ENCODE measurements at regions of chr4 and their contacts with region 1.

Region 1: DNA sequence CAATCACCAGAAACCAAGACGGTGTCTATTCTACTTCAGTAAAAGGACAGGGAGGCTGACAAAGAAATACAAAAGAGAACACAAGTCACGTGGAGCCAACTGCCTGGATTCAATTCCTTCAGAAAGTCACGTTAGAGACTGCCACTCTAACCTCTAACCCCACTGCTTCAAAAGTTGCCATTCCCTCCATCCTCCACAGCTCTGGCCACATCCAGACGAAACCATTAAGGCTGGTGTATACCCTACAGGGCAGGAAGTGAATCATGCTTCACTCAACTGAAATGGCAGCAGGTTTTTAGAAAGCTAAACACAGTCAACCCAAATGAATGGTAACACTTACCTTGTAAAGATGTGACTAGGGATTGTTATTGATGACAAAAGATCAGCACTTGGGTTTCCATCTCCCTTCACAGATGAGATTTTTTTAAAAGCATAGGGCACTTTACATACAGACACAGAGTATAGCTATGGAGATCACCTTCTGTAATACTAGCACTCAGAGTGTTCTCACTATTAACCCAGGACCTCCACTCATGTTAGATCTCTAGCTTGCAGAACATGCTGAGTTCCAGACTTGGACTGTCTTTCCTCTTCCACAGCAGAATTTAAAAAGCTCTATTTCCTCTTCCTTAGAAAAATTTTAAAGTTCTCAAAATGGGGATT is 37.4 kb downstream of the MAML3 start:
- DNase-seq: peak in 4 of 9 experiments; percentile 16 to 38 (median 24)
- ATAC-seq: peak; percentile 92
- H3K4me3 ChIP-seq: no peak overlapping the region
- H3K4me3 Mint-ChIP-seq: no peak overlapping the region
- H3K27ac ChIP-seq: no peak overlapping the region
- H3K27ac Mint-ChIP-seq: no peak overlapping the region
- H3K4me1 ChIP-seq: peaks cover 12% of the 10 kb centered on the region
- H3K4me1 Mint-ChIP-seq: peaks cover 20% of the 10 kb centered on the region
- H3K27me3 ChIP-seq: no peaks in the 10 kb centered on the region
- H3K27me3 Mint-ChIP-seq: no peaks in the 10 kb centered on the region
- CTCF ChIP-seq: no peak

Region 2: DNA sequence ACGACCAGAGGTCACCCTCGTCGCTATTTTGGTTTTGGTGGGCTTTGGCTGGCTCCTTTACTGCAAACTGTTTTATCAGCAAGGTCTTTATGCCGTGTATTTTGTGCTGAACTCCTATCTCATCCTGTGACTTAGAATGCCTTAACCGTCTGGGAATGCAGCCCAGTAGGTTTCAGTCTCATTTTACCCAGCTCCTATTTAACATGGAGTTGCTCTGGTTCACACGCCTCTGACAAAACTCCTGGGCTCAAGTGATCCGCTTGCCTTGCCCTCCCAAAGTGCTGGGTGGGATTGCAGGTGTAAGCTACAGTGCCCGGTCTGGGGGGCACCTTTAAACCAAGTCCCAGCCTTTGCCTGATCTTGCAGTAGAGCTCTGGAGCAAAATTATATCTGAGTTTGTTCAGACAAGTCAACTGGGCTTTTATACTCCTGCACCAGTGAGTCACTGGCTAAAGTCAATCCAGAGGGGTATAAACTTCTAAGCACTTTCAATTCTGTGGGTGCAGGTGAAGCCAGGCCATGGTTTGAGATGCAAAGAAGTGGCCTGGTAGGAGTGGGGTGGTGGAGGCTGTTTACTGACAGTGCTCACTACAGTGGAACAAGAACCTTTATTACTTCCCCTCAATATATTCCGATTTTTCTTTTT is 400.7 kb before region 1 on chr4:
- CTCF ChIA-PET with region 1: no interaction called
- POLR2A ChIA-PET with region 1: no interaction called
- intact Hi-C with region 1: no loop called
- DNase-seq: no peak
- ATAC-seq: no peak
- H3K4me3 ChIP-seq: no peak overlapping the region
- H3K4me3 Mint-ChIP-seq: no peak overlapping the region
- H3K27ac ChIP-seq: no peak overlapping the region
- H3K27ac Mint-ChIP-seq: no peak overlapping the region
- H3K4me1 ChIP-seq: no peaks in the 10 kb centered on the region
- H3K4me1 Mint-ChIP-seq: no peaks in the 10 kb centered on the region
- H3K27me3 ChIP-seq: no peaks in the 10 kb centered on the region
- H3K27me3 Mint-ChIP-seq: no peaks in the 10 kb centered on the region
- CTCF ChIP-seq: no peak

Region 3: GRCh38 chr4:139934057-139934707 is 182.4 kb before region 1 on chr4:
- CTCF ChIA-PET with region 1: no interaction called
- POLR2A ChIA-PET with region 1: no interaction called
- intact Hi-C with region 1: no loop called
- DNase-seq: no peak
- ATAC-seq: no peak
- H3K4me3 ChIP-seq: no peak overlapping the region
- H3K4me3 Mint-ChIP-seq: no peak overlapping the region
- H3K27ac ChIP-seq: no peak overlapping the region
- H3K27ac Mint-ChIP-seq: no peak overlapping the region
- H3K4me1 ChIP-seq: no peaks in the 10 kb centered on the region
- H3K4me1 Mint-ChIP-seq: no peaks in the 10 kb centered on the region
- H3K27me3 ChIP-seq: no peaks in the 10 kb centered on the region
- H3K27me3 Mint-ChIP-seq: no peaks in the 10 kb centered on the region
- CTCF ChIP-seq: no peak

Region 4: GRCh38 chr4:140037357-140038030 is 79.1 kb before region 1 on chr4:
- CTCF ChIA-PET with region 1: no interaction called
- POLR2A ChIA-PET with region 1: no interaction called
- intact Hi-C with region 1: no loop called
- DNase-seq: no peak
- ATAC-seq: no peak
- H3K4me3 ChIP-seq: no peak overlapping the region
- H3K4me3 Mint-ChIP-seq: no peak overlapping the region
- H3K27ac ChIP-seq: no peak overlapping the region
- H3K27ac Mint-ChIP-seq: no peak overlapping the region
- H3K4me1 ChIP-seq: peaks cover 10% of the 10 kb centered on the region
- H3K4me1 Mint-ChIP-seq: peaks cover 5% of the 10 kb centered on the region
- H3K27me3 ChIP-seq: peaks cover 0 to 2% of the 10 kb centered on the region in 2 experiments
- H3K27me3 Mint-ChIP-seq: no peaks in the 10 kb centered on the region
- CTCF ChIP-seq: no peak

Region 5: GRCh38 chr4:140133576-140133975 is 17.0 kb after region 1 on chr4:
- CTCF ChIA-PET with region 1: no interaction called
- POLR2A ChIA-PET with region 1: interaction called, 3 read pairs
- intact Hi-C with region 1: loop called in 1 of 2 experiments (anchors 2 kb)
- DNase-seq: no peak
- ATAC-seq: no peak
- H3K4me3 ChIP-seq: no peak overlapping the region
- H3K4me3 Mint-ChIP-seq: no peak overlapping the region
- H3K27ac ChIP-seq: no peak overlapping the region
- H3K27ac Mint-ChIP-seq: no peak overlapping the region
- H3K4me1 ChIP-seq: no peaks in the 10 kb centered on the region
- H3K4me1 Mint-ChIP-seq: peaks cover 24% of the 10 kb centered on the region
- H3K27me3 ChIP-seq: no peaks in the 10 kb centered on the region
- H3K27me3 Mint-ChIP-seq: no peaks in the 10 kb centered on the region
- CTCF ChIP-seq: no peak